ENCODE measurements at regions of chr18 and their contacts with region 1.

Region 1: DNA sequence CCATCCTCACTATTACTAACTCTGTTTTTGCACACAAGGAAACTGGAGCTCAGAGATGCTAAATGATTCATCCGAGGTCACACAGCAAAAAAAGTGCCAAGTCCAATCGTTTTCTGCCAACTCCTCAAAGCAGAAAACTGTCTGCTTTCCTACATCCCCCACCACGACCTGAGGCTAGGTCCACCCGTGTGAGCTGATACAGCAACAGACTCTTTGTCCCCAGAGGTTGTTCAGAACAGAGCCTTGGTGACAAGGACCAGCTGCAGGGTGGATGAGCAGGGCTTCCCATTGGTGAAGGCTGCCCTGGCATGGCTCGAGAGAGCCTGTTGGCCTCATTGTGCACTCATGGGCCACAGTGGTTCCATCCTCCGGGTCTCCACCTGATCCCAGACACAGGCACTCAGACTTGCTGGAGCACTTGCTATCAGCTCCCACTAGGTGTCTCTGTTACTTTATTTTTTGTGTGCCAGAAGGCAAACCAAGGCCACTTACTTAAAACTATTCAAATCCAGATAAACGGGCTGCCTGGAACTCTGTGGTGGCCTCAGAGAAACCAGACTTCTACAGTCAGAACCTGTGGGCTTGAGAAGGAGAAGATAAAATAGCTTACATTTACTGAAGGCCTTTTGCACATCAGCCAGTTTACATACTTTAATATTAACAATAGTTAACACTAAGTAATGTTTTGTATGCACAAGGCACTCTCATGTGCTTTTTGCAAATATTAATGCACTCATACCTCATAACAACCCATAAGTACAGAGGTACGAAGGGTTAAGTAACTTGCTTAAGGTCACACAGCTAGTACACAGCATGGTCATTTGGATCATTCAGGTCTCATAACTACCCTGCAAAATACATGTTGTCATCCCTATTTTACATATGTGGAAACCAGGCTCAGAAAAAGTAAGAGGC is 62.9 kb upstream of the CTIF start:
- DNase-seq: no peak
- H3K4me3 ChIP-seq: no peak overlapping the region
- H3K27me3 ChIP-seq: no peaks in the 10 kb centered on the region
- CTCF ChIP-seq: peak; percentile 84

Region 2: GRCh38 chr18:48486754-48487153 is 10.9 kb after region 1 on chr18:
- CTCF ChIA-PET with region 1: interaction called, 12 read pairs
- POLR2A ChIA-PET with region 1: no interaction called
- DNase-seq: peak; percentile 59
- H3K4me3 ChIP-seq: no peak overlapping the region
- H3K27me3 ChIP-seq: no peaks in the 10 kb centered on the region
- CTCF ChIP-seq: no peak

Region 3: DNA sequence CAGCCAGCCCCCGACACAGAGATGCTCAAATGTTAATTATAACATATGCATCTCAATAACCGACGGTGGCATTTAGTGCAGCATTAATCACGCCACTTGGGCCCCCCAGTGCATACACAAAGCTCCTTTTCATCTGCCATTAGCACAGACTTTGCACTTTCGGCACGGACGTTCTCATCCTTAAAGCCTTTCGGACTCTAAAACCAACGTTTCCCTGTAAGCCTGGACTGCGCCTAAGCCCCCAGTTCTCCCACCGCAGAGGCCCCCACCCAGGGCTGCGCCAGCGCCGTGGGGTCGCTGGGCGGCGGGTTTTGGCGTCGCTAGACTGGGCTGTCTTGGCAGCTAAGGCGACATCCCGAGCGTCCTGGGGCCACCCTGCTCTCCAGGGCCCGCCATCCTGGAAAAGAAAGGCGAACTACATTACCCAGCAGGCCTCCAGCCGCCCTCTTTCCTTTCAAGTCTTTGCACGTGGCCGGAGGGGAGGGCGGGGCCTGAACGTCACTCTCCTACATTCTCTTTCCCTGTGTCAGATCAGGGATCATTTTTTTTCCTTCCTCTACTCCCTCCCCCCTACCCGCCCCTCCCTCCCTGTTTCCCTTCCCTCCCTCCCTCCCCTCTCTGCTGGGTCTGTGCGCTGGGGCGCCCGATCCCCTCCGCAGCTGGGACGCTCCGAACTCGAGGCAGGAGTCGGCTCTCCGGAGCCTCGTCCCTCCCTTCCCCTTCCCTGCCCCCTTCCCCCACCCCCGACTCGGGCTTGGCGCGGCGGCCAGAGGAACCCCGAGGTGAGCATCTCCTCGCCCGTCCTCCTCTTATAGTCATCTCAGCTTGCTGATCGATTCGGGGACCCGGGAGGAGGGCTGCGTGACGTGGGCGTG is 62.9 kb after region 1 on chr18 and contains the start of gene CTIF:
- CTCF ChIA-PET with region 1: interaction called, 15 read pairs
- POLR2A ChIA-PET with region 1: interaction called, 3 read pairs
- DNase-seq: peak; percentile 88
- H3K4me3 ChIP-seq: peak within 1 kb of the TSS; percentile 95
- H3K27me3 ChIP-seq: no peaks in the 10 kb centered on the region
- CTCF ChIP-seq: no peak
- polyA plus RNA-seq, gene CTIF: 53.4 and 105 TPM in 2 replicates

Region 4: DNA sequence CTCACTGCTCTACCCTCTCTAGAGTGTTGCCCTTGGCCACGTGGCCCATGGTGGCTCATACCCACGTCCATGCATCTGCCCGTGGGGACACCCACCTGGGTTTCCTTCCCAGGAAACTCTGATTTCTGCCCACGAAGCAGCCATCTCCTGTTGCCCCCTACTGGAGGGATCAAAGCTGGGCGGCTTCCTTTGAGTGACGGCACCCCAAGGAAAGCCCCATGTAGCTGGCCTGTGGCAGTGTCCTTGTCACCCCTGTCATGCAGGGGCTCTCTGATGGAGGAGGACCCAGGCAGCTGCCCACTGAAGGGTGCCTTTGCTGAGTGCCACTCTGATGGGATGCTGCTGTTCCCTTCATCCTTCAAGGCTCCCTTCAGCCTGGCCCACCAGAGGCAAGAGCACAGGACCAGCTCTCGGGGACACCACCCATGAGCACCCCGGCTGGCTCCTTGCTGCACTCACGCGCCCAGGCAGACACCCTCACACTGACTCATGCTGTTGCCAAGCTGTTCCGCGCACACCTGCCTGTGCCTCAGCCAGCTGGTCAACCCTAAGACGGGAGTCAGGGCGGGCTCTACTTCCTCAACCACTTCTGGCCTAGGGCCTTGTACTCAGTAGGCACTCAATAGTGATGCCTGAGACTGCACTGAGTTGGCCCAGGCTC is 164.0 kb after region 1 on chr18:
- CTCF ChIA-PET with region 1: interaction called, 10 read pairs
- POLR2A ChIA-PET with region 1: no interaction called
- DNase-seq: no peak
- H3K4me3 ChIP-seq: no peak overlapping the region
- H3K27me3 ChIP-seq: no peaks in the 10 kb centered on the region
- CTCF ChIP-seq: peak; percentile 45

Region 5: GRCh38 chr18:48663931-48664847 is 188.3 kb after region 1 on chr18:
- CTCF ChIA-PET with region 1: interaction called, 35 read pairs
- POLR2A ChIA-PET with region 1: no interaction called
- DNase-seq: no peak
- H3K4me3 ChIP-seq: no peak overlapping the region
- H3K27me3 ChIP-seq: no peaks in the 10 kb centered on the region
- CTCF ChIP-seq: peak; percentile 91

Region 6: GRCh38 chr18:48675352-48675761 is 199.5 kb after region 1 on chr18:
- CTCF ChIA-PET with region 1: interaction called, 27 read pairs
- POLR2A ChIA-PET with region 1: interaction called, 5 read pairs
- DNase-seq: no peak
- H3K4me3 ChIP-seq: no peak overlapping the region
- H3K27me3 ChIP-seq: no peaks in the 10 kb centered on the region
- CTCF ChIP-seq: peak; percentile 91